ENCODE measurements at regions of chr5 and their contacts with region 1.

Region 1: GRCh38 chr5:170633235-170634081 is 129.6 kb downstream of the KCNIP1 start:
- DNase-seq: peak; percentile 88
- H3K4me3 ChIP-seq: peak overlapping the region; percentile 43 to 74
- H3K27ac ChIP-seq: peak overlapping the region; percentile 91 to 96
- H3K4me1 ChIP-seq: peaks cover 7 to 31% of the 10 kb centered on the region in 2 experiments; a peak in 2 of 4 replicates
- H3K27me3 ChIP-seq: no peaks in the 10 kb centered on the region
- CTCF ChIP-seq: no peak
- EP300 ChIP-seq: no peak
- RAD21 ChIP-seq: no peak

Region 2: GRCh38 chr5:170434966-170435605 is 198.4 kb before region 1 on chr5:
- CTCF ChIA-PET with region 1: interaction called, 202 read pairs
- POLR2A ChIA-PET with region 1: no interaction called
- DNase-seq: peak; percentile 85
- H3K4me3 ChIP-seq: peak overlapping the region in 1 of 2 experiments; percentile 38; a peak in 1 of 4 replicates
- H3K27ac ChIP-seq: no peak overlapping the region
- H3K4me1 ChIP-seq: peaks cover 0 to 8% of the 10 kb centered on the region in 2 experiments; a peak in 1 of 4 replicates
- H3K27me3 ChIP-seq: no peaks in the 10 kb centered on the region
- CTCF ChIP-seq: peak; percentile 97
- EP300 ChIP-seq: no peak
- RAD21 ChIP-seq: peak; percentile 95

Region 3: GRCh38 chr5:170603578-170604565 is 29.6 kb before region 1 on chr5:
- CTCF ChIA-PET with region 1: interaction called, 614 read pairs
- POLR2A ChIA-PET with region 1: no interaction called
- DNase-seq: peak; percentile 84
- H3K4me3 ChIP-seq: no peak overlapping the region
- H3K27ac ChIP-seq: no peak overlapping the region
- H3K4me1 ChIP-seq: peaks cover 0 to 25% of the 10 kb centered on the region in 2 experiments; a peak in 1 of 4 replicates
- H3K27me3 ChIP-seq: peaks cover 14% of the 10 kb centered on the region; the same call in 1 of the 2 replicates
- CTCF ChIP-seq: peak; percentile 79
- EP300 ChIP-seq: no peak
- RAD21 ChIP-seq: peak; percentile 89

Region 4: DNA sequence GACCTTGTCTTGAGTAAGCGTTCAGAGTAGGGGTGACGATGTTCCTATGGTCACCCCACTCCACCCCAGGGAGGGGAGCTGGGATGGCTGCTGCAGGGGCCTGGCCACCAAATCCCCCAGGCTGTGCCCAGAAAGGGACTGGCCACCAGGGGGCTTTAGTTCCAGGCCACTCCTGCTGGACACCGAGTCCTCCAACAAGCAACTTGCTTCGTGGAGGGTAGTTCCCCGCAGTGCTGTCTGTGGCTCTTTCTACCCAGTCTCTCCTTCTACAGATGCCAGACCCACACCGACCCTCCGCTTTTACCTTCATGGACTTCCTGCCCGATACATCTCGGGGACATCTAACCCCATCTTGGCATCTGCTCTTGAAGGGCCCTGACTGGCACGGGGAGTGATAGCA is 114.4 kb after region 1 on chr5:
- CTCF ChIA-PET with region 1: interaction called, 20 read pairs
- POLR2A ChIA-PET with region 1: no interaction called
- DNase-seq: peak; percentile 59
- H3K4me3 ChIP-seq: no peak overlapping the region
- H3K27ac ChIP-seq: peak overlapping the region in 1 of 2 experiments; percentile 20; a peak in 1 of 4 replicates
- H3K4me1 ChIP-seq: peaks cover 0 to 77% of the 10 kb centered on the region in 2 experiments; a peak in 2 of 4 replicates
- H3K27me3 ChIP-seq: no peaks in the 10 kb centered on the region
- CTCF ChIP-seq: peak; percentile 48
- EP300 ChIP-seq: no peak
- RAD21 ChIP-seq: peak; percentile 33; the same call in 1 of the 2 replicates

Measured in SK-N-SH (cell line).